GM12878 (cell line): ENCODE measurements at regions of chr1 and their contacts with region 1.

Region 1: DNA sequence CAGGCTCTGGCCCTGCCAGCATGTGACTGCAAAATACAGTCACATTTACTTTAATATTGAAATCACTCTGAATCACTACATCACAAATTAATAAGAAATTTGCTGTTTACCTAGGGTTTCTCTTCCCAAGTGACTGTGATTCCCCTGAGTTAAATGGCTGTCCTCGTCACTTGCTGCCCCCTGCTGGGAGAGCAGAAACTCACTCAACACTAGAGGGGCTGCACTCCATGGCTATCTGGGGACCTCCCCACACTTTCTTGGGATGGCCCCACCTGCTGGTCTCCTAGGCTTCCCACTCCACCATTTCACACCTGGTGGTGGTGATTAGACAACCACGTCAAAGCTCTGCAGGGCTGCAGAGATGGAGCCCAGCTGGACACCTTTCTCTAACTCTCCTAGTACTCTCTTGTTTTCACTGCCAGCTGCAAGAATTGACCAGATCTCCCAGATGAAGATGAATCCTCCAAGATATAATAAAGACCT is 63.4 kb downstream of the CD2 start:
- DNase-seq: no peak
- ATAC-seq: peak; percentile 91
- H3K4me3 ChIP-seq: no peak overlapping the region
- H3K27ac ChIP-seq: no peak overlapping the region
- H3K4me1 ChIP-seq: peaks cover 4% of the 10 kb centered on the region; the same call in 1 of the 2 replicates
- H3K27me3 ChIP-seq: no peaks in the 10 kb centered on the region
- CTCF ChIP-seq: peak; percentile 76 to 78 (median 77)
- EP300 ChIP-seq: no peak
- POLR2A ChIP-seq: no peak
- RAD21 ChIP-seq: peak; percentile 90

Region 2: GRCh38 chr1:116418091-116418830 is 399.4 kb before region 1 on chr1:
- CTCF ChIA-PET with region 1: no interaction called
- POLR2A ChIA-PET with region 1: no interaction called
- RAD21 ChIA-PET with region 1: no interaction called
- SMC1A ChIA-PET with region 1: no interaction called
- in situ Hi-C with region 1: no loop called
- intact Hi-C with region 1: no loop called
- DNase-seq: peak; percentile 51
- ATAC-seq: peak; percentile 96
- H3K4me3 ChIP-seq: peak overlapping the region; percentile 96
- H3K27ac ChIP-seq: peak overlapping the region; percentile 89
- H3K4me1 ChIP-seq: peaks cover 11% of the 10 kb centered on the region
- H3K27me3 ChIP-seq: no peaks in the 10 kb centered on the region
- CTCF ChIP-seq: no peak
- EP300 ChIP-seq: no peak
- POLR2A ChIP-seq: peak; percentile 100
- RAD21 ChIP-seq: no peak

Region 3: GRCh38 chr1:116763787-116764465 is 53.7 kb before region 1 on chr1:
- CTCF ChIA-PET with region 1: interaction called, 53 read pairs
- POLR2A ChIA-PET with region 1: no interaction called
- RAD21 ChIA-PET with region 1: interaction called, 14 read pairs
- SMC1A ChIA-PET with region 1: interaction called, 19 read pairs
- in situ Hi-C with region 1: no loop called
- intact Hi-C with region 1: loop called (anchors 2 kb)
- DNase-seq: no peak
- ATAC-seq: peak; percentile 22
- H3K4me3 ChIP-seq: no peak overlapping the region
- H3K27ac ChIP-seq: no peak overlapping the region
- H3K4me1 ChIP-seq: peaks cover 10% of the 10 kb centered on the region
- H3K27me3 ChIP-seq: no peaks in the 10 kb centered on the region; a peak in 1 of 4 replicates
- CTCF ChIP-seq: peak; percentile 25 to 41 (median 36); a peak in 5 of 6 replicates
- EP300 ChIP-seq: no peak
- POLR2A ChIP-seq: no peak
- RAD21 ChIP-seq: peak; percentile 44

Region 4: GRCh38 chr1:116794804-116795481 is 22.7 kb before region 1 on chr1:
- CTCF ChIA-PET with region 1: interaction called, 12 read pairs
- POLR2A ChIA-PET with region 1: interaction called, 4 read pairs
- RAD21 ChIA-PET with region 1: interaction called, 15 read pairs
- SMC1A ChIA-PET with region 1: interaction called, 13 read pairs
- in situ Hi-C with region 1: no loop called
- intact Hi-C with region 1: no loop called
- DNase-seq: peak; percentile 87
- ATAC-seq: peak; percentile 96
- H3K4me3 ChIP-seq: peak overlapping the region; percentile 14; the same call in 1 of the 2 replicates
- H3K27ac ChIP-seq: peak overlapping the region; percentile 57
- H3K4me1 ChIP-seq: peaks cover 11% of the 10 kb centered on the region
- H3K27me3 ChIP-seq: no peaks in the 10 kb centered on the region
- CTCF ChIP-seq: no peak
- EP300 ChIP-seq: peak; percentile 71 to 87
- POLR2A ChIP-seq: no peak
- RAD21 ChIP-seq: no peak

Region 5: GRCh38 chr1:116806245-116806644 is 11.4 kb before region 1 on chr1:
- CTCF ChIA-PET with region 1: interaction called, 9 read pairs
- POLR2A ChIA-PET with region 1: interaction called, 15 read pairs
- RAD21 ChIA-PET with region 1: interaction called, 9 read pairs
- SMC1A ChIA-PET with region 1: interaction called, 15 read pairs
- in situ Hi-C with region 1: no loop called
- intact Hi-C with region 1: no loop called
- DNase-seq: peak; percentile 76
- ATAC-seq: peak; percentile 81
- H3K4me3 ChIP-seq: no peak overlapping the region
- H3K27ac ChIP-seq: no peak overlapping the region
- H3K4me1 ChIP-seq: peaks cover 5% of the 10 kb centered on the region
- H3K27me3 ChIP-seq: no peaks in the 10 kb centered on the region
- CTCF ChIP-seq: no peak
- EP300 ChIP-seq: no peak
- POLR2A ChIP-seq: no peak
- RAD21 ChIP-seq: no peak

Region 6: DNA sequence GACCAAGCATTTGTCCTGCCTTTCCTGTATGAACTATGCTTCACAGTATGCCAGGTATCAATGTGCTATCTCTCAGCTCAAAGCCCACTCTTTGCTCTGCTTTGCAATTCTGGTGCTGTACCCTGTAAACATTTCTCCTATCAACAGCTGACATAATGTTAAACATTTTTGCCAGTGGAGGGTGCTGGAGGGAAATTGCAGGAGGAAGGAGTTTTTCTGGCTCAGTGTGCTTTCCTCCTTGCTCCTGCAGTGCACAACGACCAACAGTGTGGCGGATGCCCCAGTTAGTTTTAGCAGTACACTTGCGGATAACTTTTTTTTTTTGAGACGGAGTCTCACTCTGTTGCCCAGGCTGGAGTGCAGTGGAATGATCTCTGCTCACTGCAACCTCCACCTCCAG is 25.0 kb after region 1 on chr1:
- CTCF ChIA-PET with region 1: interaction called, 5 read pairs
- POLR2A ChIA-PET with region 1: no interaction called
- RAD21 ChIA-PET with region 1: interaction called, 3 read pairs
- SMC1A ChIA-PET with region 1: interaction called, 10 read pairs
- in situ Hi-C with region 1: no loop called
- intact Hi-C with region 1: no loop called
- DNase-seq: no peak
- ATAC-seq: no peak; the same call in 2 of the 3 replicates
- H3K4me3 ChIP-seq: no peak overlapping the region
- H3K27ac ChIP-seq: no peak overlapping the region
- H3K4me1 ChIP-seq: peaks cover 2% of the 10 kb centered on the region; the same call in 1 of the 2 replicates
- H3K27me3 ChIP-seq: no peaks in the 10 kb centered on the region
- CTCF ChIP-seq: no peak
- EP300 ChIP-seq: no peak
- POLR2A ChIP-seq: no peak
- RAD21 ChIP-seq: no peak

Region 7: DNA sequence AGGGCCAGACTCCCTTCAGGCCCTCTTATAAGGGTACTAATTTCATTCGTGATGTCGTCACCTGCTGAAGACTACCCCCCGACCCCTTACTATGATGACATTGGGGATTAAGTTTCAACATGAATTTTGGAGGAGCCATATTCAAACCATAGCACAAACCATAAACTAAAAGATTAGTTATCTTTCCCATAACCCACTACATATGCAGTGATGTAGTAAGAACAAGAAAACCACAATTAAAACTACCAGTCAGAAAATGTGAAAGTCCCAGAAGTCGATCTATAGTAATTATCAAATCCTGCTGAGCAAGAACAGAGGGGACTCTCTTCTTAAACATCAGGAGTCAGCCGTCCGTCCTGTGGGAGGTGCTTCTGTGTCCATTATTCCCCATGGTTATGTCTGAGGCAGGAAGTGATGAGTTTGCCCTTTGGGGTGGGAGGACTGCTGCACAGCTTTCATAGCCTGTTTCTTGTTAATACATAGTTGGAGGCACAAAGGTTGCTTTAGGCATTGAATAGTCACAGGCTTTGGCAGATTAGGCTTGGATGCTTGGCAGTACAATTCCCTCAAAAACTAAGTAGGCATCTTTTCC is 56.2 kb after region 1 on chr1:
- CTCF ChIA-PET with region 1: interaction called, 10 read pairs
- POLR2A ChIA-PET with region 1: no interaction called
- RAD21 ChIA-PET with region 1: interaction called, 5 read pairs
- SMC1A ChIA-PET with region 1: interaction called, 9 read pairs
- in situ Hi-C with region 1: no loop called
- intact Hi-C with region 1: no loop called
- DNase-seq: no peak
- ATAC-seq: peak; percentile 11
- H3K4me3 ChIP-seq: no peak overlapping the region
- H3K27ac ChIP-seq: no peak overlapping the region
- H3K4me1 ChIP-seq: peaks cover 8% of the 10 kb centered on the region; the same call in 1 of the 2 replicates
- H3K27me3 ChIP-seq: no peaks in the 10 kb centered on the region
- CTCF ChIP-seq: no peak
- EP300 ChIP-seq: no peak
- POLR2A ChIP-seq: no peak
- RAD21 ChIP-seq: no peak

Region 8: GRCh38 chr1:117051224-117052064 is 233.8 kb after region 1 on chr1:
- CTCF ChIA-PET with region 1: interaction called, 6 read pairs
- POLR2A ChIA-PET with region 1: interaction called, 3 read pairs
- RAD21 ChIA-PET with region 1: interaction called, 6 read pairs
- SMC1A ChIA-PET with region 1: interaction called, 9 read pairs
- in situ Hi-C with region 1: no loop called
- intact Hi-C with region 1: loop called (anchors 5 kb)
- DNase-seq: peak; percentile 34
- ATAC-seq: peak; percentile 93
- H3K4me3 ChIP-seq: peak overlapping the region; percentile 61; the same call in 1 of the 2 replicates
- H3K27ac ChIP-seq: peak overlapping the region; percentile 89
- H3K4me1 ChIP-seq: peaks cover 13% of the 10 kb centered on the region
- H3K27me3 ChIP-seq: no peaks in the 10 kb centered on the region
- CTCF ChIP-seq: no peak
- EP300 ChIP-seq: no peak; a peak in 1 of 4 replicates
- POLR2A ChIP-seq: peak; percentile 55
- RAD21 ChIP-seq: peak; percentile 2; the same call in 1 of the 2 replicates